ENCODE measurements at regions of chr6 and their contacts with region 1.

Region 1: GRCh38 chr6:29649701-29650673 is 6.9 kb upstream of the MOG start:
- DNase-seq: peak; percentile 99
- H3K4me3 Mint-ChIP-seq: peak overlapping the region; percentile 92
- H3K27ac Mint-ChIP-seq: peak overlapping the region; percentile 92
- H3K4me1 Mint-ChIP-seq: peaks cover 4% of the 10 kb centered on the region
- H3K27me3 Mint-ChIP-seq: no peaks in the 10 kb centered on the region

Region 2: GRCh38 chr6:29626948-29627754 is 22.8 kb before region 1 on chr6:
- CTCF ChIA-PET with region 1: interaction called, 21 read pairs
- intact Hi-C with region 1: loop called (anchors 1 kb)
- DNase-seq: no peak
- H3K4me3 Mint-ChIP-seq: peak overlapping the region; percentile 38
- H3K27ac Mint-ChIP-seq: no peak overlapping the region
- H3K4me1 Mint-ChIP-seq: peaks cover 30% of the 10 kb centered on the region
- H3K27me3 Mint-ChIP-seq: peaks cover 3% of the 10 kb centered on the region

Region 3: DNA sequence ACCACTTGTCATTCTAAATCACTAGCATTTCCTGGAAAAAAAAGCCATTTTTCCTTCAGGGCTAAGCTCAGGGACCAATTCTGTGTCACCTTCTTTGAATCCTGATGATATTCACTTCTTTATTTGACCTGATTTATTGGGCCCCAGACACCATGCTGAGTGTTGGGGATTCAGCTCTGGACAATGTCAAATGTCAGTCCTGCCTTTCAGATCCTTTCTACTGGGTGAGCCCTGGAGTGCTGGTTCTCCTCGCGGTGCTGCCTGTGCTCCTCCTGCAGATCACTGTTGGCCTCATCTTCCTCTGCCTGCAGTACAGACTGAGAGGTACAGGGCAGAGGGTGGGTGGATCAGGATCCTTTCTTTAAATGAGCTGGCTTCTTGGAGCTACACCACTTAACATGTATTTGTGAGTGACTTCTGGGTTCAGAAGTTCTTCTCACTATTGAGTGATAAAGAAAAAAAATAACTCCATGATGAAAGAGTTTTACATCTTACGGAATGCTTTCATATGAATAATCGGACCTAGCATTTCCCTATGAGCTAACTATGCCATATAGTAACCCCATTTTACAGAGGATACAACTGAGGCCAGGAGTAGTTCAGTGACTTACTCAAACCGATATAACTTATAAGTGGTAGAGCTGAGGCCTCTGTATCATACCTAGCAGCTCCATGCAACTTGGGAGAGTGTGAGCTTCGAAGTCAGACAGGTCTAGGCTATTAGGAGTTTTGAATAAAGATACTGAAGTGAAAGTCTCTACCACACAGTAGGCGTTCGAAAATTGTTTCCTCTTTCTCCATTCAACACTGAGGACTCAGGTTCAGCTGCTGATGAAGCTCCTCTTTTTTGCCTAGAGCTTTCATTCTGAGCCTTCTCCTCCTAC is 16.2 kb after region 1 on chr6:
- CTCF ChIA-PET with region 1: interaction called, 51 read pairs
- intact Hi-C with region 1: no loop called
- DNase-seq: no peak
- H3K4me3 Mint-ChIP-seq: no peak overlapping the region
- H3K27ac Mint-ChIP-seq: no peak overlapping the region
- H3K4me1 Mint-ChIP-seq: no peaks in the 10 kb centered on the region
- H3K27me3 Mint-ChIP-seq: peaks cover 25% of the 10 kb centered on the region

Region 4: DNA sequence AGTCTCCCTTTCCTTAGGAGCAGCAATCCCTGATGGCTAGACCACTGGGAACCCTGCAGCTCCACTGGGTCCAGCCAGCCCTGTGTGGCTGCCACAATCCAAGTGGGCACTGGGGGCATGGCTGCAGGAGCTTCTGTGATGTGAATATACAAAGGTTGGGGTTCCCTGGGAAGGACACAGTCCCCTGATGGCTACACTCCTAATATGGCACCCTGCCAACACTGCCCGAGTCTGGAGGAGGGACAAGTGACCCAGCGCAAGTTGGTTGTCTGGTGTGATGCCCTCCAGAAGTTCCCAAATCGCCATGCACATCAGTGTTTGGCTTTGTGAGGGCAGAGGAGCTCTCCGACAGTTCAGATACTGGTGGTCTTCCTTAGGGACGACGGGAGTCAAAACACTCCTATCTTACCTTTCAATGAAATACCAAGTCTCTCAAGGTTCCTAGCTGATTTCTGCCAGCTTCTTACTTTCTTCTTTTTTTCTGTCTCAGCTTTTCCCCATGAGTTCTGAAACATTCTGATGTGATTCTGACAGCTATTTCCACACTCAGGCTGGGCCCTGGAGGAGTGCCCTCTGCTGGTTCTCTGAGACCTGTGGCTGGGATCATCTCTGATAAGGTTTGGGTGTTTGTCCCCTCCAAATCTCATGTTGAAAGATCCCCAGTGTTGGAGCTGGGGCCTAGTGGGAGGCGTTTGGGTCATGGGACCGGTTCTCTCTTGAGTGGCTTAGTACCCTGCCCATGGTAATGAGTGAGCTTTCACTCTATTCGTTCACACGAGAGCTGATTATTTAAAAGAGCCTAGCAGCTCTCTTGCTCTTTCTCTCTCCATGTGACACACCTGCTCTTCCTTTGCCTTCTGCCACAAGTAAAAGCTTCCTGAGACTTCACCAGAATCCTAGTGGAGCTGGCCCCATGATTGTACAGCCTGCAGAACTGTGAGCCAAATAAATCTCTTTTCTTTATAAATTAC is 46.5 kb after region 1 on chr6:
- CTCF ChIA-PET with region 1: interaction called, 21 read pairs
- intact Hi-C with region 1: no loop called
- DNase-seq: no peak
- H3K4me3 Mint-ChIP-seq: no peak overlapping the region
- H3K27ac Mint-ChIP-seq: no peak overlapping the region
- H3K4me1 Mint-ChIP-seq: no peaks in the 10 kb centered on the region
- H3K27me3 Mint-ChIP-seq: no peaks in the 10 kb centered on the region

Region 5: DNA sequence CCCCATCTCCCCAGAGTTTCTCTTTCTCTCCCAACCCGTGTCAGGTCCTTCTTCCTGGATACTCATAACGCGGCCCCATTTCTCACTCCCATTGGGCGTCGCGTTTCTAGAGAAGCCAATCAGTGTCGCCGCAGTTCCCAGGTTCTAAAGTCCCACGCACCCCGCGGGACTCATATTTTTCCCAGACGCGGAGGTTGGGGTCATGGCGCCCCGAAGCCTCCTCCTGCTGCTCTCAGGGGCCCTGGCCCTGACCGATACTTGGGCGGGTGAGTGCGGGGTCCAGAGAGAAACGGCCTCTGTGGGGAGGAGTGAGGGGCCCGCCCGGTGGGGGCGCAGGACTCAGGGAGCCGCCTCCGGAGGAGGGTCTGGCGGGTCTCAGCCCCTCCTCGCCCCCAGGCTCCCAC is 73.3 kb after region 1 on chr6 and contains the start of gene HLA-F:
- CTCF ChIA-PET with region 1: interaction called, 8 read pairs
- intact Hi-C with region 1: loop called (anchors 5 kb)
- DNase-seq: peak; percentile 93
- H3K4me3 Mint-ChIP-seq: peak within 1 kb of the TSS; percentile 90
- H3K27ac Mint-ChIP-seq: peak within 1 kb of the TSS; percentile 97
- H3K4me1 Mint-ChIP-seq: peaks cover 55% of the 10 kb centered on the region
- H3K27me3 Mint-ChIP-seq: no peaks in the 10 kb centered on the region
- total RNA-seq, gene HLA-F: 282 to 310 TPM

Region 6: GRCh38 chr6:29827579-29828470 is 177.8 kb after region 1 on chr6 and contains the start of gene HLA-G:
- CTCF ChIA-PET with region 1: interaction called, 6 read pairs
- intact Hi-C with region 1: loop called (anchors 5 kb)
- DNase-seq: no peak
- H3K4me3 Mint-ChIP-seq: peak within 1 kb of the TSS; percentile 45
- H3K27ac Mint-ChIP-seq: no peak within 1 kb of the TSS
- H3K4me1 Mint-ChIP-seq: peaks cover 16% of the 10 kb centered on the region
- H3K27me3 Mint-ChIP-seq: peaks cover 50% of the 10 kb centered on the region
- total RNA-seq, gene HLA-G: 0.22 TPM in 1 of 2 experiments, not detected in the other

Region 7: GRCh38 chr6:29864037-29864795 is 214.2 kb after region 1 on chr6:
- CTCF ChIA-PET with region 1: no interaction called
- intact Hi-C with region 1: no loop called
- DNase-seq: no peak
- H3K4me3 Mint-ChIP-seq: no peak overlapping the region
- H3K27ac Mint-ChIP-seq: no peak overlapping the region
- H3K4me1 Mint-ChIP-seq: no peaks in the 10 kb centered on the region
- H3K27me3 Mint-ChIP-seq: peaks cover 17% of the 10 kb centered on the region

Region 8: GRCh38 chr6:30700340-30700739 is 1050.4 kb after region 1 on chr6:
- CTCF ChIA-PET with region 1: no interaction called
- intact Hi-C with region 1: no loop called
- DNase-seq: no peak
- H3K4me3 Mint-ChIP-seq: no peak overlapping the region
- H3K27ac Mint-ChIP-seq: no peak overlapping the region
- H3K4me1 Mint-ChIP-seq: peaks cover 4% of the 10 kb centered on the region
- H3K27me3 Mint-ChIP-seq: no peaks in the 10 kb centered on the region